ENCODE measurements at regions of chr9 and their contacts with region 1.

Region 1: GRCh38 chr9:12961276-12961809 is 186.5 kb downstream of the LURAP1L start:
- DNase-seq: no peak
- ATAC-seq: no peak
- H3K4me3 ChIP-seq: no peak overlapping the region
- H3K27ac ChIP-seq: no peak overlapping the region
- H3K4me1 ChIP-seq: no peaks in the 10 kb centered on the region
- H3K27me3 ChIP-seq: no peaks in the 10 kb centered on the region
- CTCF ChIP-seq: no peak
- POLR2A ChIP-seq: no peak

Region 2: DNA sequence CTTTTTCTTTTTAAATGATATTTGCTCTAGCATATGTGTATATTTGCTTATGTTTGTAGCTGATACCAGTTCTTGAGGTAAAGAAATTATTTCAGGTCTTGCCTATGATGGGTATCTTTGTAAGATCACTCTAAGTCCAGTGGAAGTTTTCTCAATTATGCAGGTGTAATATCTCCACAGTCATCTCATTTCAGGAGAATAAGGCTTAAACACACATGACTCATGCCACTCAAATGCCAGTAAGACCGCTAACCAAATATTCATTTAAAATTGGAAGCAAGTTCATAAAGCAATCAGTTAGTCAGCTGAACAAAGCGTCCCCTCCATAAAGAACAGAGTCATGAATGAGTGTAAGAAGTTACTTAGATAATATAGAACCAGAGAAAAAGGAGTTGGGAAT is 62.1 kb after region 1 on chr9:
- in situ Hi-C with region 1: loop called in 1 of 4 experiments (anchors 10 kb)
- intact Hi-C with region 1: no loop called
- DNase-seq: no peak
- ATAC-seq: no peak
- H3K4me3 ChIP-seq: no peak overlapping the region
- H3K27ac ChIP-seq: no peak overlapping the region
- H3K4me1 ChIP-seq: no peaks in the 10 kb centered on the region
- H3K27me3 ChIP-seq: no peaks in the 10 kb centered on the region
- CTCF ChIP-seq: no peak
- POLR2A ChIP-seq: no peak